ENCODE measurements at regions of chr14 and their contacts with region 1.

Region 1: DNA sequence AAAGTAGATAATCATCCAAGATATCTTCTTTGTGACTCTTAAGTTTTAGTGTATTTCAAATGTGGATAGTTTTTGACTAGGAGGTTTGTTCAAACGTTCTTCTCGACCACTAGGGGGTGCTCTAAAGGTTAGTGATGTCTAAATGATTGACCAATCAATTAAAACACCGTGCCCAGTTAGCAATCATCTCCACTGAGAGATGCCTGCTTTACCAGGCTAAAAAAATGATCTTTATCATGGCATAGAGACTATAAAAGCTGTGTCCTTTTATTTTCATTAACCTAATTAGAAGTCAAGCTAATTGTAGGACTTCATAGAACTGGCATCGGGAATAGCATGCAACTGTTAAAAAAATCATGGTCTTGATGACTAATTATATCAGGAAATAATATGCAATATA is 153.9 kb downstream of the PRKCH start:
- DNase-seq: no peak
- H3K4me3 ChIP-seq: no peak overlapping the region
- H3K27ac ChIP-seq: peak overlapping the region in 1 of 2 donors; percentile 61
- H3K4me1 ChIP-seq: no peaks in the 10 kb centered on the region
- H3K27me3 ChIP-seq: no peaks in the 10 kb centered on the region
- CTCF ChIP-seq: peak; percentile 47 to 87 (median 71)
- POLR2A ChIP-seq: no peak

Region 2: GRCh38 chr14:60905923-60906322 is 569.4 kb before region 1 on chr14:
- intact Hi-C with region 1: no loop called
- DNase-seq: no peak
- H3K4me3 ChIP-seq: no peak overlapping the region
- H3K27ac ChIP-seq: no peak overlapping the region
- H3K4me1 ChIP-seq: no peaks in the 10 kb centered on the region
- H3K27me3 ChIP-seq: no peaks in the 10 kb centered on the region
- CTCF ChIP-seq: no peak
- POLR2A ChIP-seq: no peak

Region 3: GRCh38 chr14:61525293-61526011 is 50.1 kb after region 1 on chr14:
- intact Hi-C with region 1: loop called (anchors 2 kb)
- DNase-seq: peak; percentile 71
- H3K4me3 ChIP-seq: no peak overlapping the region
- H3K27ac ChIP-seq: peak overlapping the region; percentile 76 to 81
- H3K4me1 ChIP-seq: peaks cover 24% of the 10 kb centered on the region
- H3K27me3 ChIP-seq: no peaks in the 10 kb centered on the region
- CTCF ChIP-seq: no peak
- POLR2A ChIP-seq: no peak

Region 4: GRCh38 chr14:61542848-61543790 is 67.8 kb after region 1 on chr14:
- intact Hi-C with region 1: loop called (anchors 5 kb)
- DNase-seq: no peak
- H3K4me3 ChIP-seq: no peak overlapping the region
- H3K27ac ChIP-seq: peak overlapping the region; percentile 69 to 76
- H3K4me1 ChIP-seq: peaks cover 31% of the 10 kb centered on the region
- H3K27me3 ChIP-seq: no peaks in the 10 kb centered on the region
- CTCF ChIP-seq: no peak
- POLR2A ChIP-seq: no peak

Region 5: DNA sequence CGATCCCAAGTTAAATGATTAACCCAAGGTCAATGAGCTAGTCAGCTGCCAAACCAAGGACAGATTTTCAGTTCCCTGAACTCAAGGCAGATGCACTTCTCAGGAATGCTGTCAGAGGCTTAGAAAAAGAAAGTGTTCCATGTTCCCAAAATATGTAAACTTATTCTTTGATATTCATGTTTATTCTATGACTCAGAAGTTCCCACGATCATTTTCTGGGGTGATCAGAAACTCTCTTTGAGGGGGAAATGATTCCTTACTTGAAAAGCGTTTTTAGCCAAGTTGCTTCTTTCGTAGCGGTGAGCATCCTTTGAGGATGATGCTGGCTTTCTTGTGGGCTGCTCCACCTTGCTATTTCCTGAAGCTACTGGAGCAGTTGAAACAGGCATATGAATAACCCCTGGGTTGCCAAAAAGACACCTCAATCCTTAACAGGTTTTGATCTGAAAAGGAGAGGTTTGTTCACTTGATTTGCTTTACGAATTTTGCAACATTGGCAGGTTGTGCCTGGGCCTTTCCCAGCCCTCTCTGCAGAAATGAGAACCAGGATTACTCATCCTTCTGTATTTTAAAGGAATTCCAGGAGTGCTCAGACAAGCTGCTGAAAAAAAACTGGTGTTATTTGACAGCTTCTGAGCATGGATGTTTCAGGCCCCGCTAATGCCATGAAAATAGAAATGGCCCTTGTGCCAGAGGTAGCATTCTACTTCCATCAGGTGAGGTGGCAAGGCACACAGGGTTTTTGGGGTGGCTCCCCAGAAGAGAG is 98.6 kb after region 1 on chr14:
- intact Hi-C with region 1: no loop called
- DNase-seq: no peak
- H3K4me3 ChIP-seq: no peak overlapping the region
- H3K27ac ChIP-seq: peak overlapping the region in 1 of 2 donors; percentile 7
- H3K4me1 ChIP-seq: no peaks in the 10 kb centered on the region
- H3K27me3 ChIP-seq: no peaks in the 10 kb centered on the region
- CTCF ChIP-seq: no peak
- POLR2A ChIP-seq: no peak

Region 6: GRCh38 chr14:61678975-61679374 is 203.7 kb after region 1 on chr14:
- intact Hi-C with region 1: no loop called
- DNase-seq: no peak
- H3K4me3 ChIP-seq: no peak overlapping the region
- H3K27ac ChIP-seq: no peak overlapping the region
- H3K4me1 ChIP-seq: no peaks in the 10 kb centered on the region
- H3K27me3 ChIP-seq: no peaks in the 10 kb centered on the region
- CTCF ChIP-seq: no peak
- POLR2A ChIP-seq: no peak

Region 7: DNA sequence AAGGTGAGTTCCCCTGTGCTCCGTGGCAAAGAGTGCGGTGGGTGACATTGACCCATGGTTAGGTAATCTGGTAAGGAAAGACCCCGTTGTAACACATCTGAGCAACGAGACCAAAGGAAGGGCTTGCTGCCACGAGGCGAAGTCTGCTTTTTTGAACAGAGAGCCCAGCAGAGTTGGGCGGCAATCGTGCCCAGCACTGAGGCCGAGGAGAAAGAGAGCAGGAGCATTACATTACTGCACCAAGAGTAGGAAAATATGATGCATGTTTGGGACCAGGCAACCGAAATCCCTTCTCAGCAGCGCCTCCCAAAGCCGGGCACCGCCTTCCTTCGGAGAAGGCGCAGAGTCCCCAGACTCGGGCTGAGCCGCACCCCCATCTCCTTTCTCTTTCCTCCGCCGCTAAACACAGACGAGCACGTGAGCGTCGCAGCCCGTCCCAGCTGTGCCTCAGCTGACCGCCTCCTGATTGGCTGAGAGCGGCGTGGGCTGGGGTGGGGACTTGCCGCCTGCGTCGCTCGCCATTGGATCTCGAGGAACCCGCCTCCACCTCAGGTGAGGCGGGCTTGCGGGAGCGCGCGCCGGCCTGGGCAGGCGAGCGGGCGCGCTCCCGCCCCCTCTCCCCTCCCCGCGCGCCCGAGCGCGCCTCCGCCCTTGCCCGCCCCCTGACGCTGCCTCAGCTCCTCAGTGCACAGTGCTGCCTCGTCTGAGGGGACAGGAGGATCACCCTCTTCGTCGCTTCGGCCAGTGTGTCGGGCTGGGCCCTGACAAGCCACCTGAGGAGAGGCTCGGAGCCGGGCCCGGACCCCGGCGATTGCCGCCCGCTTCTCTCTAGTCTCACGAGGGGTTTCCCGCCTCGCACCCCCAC is 219.7 kb after region 1 on chr14 and contains the start of gene HIF1A:
- intact Hi-C with region 1: loop called (anchors 5 kb)
- DNase-seq: peak; percentile 97
- H3K4me3 ChIP-seq: peak within 1 kb of the TSS; percentile 89 to 98
- H3K27ac ChIP-seq: peak within 1 kb of the TSS; percentile 99
- H3K4me1 ChIP-seq: no peaks in the 10 kb centered on the region
- H3K27me3 ChIP-seq: no peaks in the 10 kb centered on the region
- CTCF ChIP-seq: peak in 3 of 4 experiments; percentile 25 to 33 (median 29)
- POLR2A ChIP-seq: peak; percentile 96
- total RNA-seq, gene HIF1A: 61.7 to 101 TPM

Region 8: DNA sequence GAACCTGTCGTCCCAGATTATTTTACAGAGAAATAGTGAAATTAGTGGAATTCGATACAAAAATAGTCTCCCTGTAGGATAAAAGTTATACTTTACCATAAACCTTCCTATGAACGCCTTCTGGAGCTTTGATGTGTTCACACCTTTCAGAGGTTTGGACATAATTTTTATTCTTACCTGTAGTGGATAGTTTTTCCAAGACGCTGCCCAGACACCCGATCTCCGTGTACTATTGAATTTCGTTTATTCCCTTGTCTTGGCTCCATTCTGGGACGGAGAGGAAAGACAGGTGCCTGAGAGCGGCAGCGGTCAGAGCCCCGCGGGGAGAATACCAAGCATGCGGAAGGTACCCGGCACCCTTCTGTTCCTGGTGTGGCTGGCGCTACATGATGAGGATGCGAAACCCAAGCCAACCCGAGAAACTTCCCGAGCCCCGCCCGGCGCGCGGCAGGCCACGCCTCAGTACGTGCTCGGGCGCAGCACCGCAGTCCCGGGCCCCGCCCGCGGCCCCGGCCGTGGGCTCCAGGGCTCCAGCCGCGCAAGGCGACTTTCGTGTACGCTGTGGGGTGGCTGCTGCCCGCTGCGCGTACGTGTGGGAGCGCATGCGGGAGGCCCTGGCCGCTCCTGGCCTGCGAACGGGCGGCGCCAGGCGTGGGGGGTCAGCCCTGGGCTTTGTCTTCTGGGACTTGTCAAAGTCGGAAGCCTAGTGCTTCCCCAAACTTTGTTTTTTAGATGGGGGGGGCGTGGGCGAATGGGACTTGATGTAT is 275.6 kb after region 1 on chr14:
- intact Hi-C with region 1: loop called (anchors 2 kb)
- DNase-seq: peak; percentile 91
- H3K4me3 ChIP-seq: peak overlapping the region; percentile 45 to 52
- H3K27ac ChIP-seq: peak overlapping the region; percentile 83 to 86
- H3K4me1 ChIP-seq: peaks cover 4% of the 10 kb centered on the region
- H3K27me3 ChIP-seq: no peaks in the 10 kb centered on the region
- CTCF ChIP-seq: no peak
- POLR2A ChIP-seq: peak; percentile 81